ENCODE measurements at regions of chr6 and their contacts with region 1.

Region 1: DNA sequence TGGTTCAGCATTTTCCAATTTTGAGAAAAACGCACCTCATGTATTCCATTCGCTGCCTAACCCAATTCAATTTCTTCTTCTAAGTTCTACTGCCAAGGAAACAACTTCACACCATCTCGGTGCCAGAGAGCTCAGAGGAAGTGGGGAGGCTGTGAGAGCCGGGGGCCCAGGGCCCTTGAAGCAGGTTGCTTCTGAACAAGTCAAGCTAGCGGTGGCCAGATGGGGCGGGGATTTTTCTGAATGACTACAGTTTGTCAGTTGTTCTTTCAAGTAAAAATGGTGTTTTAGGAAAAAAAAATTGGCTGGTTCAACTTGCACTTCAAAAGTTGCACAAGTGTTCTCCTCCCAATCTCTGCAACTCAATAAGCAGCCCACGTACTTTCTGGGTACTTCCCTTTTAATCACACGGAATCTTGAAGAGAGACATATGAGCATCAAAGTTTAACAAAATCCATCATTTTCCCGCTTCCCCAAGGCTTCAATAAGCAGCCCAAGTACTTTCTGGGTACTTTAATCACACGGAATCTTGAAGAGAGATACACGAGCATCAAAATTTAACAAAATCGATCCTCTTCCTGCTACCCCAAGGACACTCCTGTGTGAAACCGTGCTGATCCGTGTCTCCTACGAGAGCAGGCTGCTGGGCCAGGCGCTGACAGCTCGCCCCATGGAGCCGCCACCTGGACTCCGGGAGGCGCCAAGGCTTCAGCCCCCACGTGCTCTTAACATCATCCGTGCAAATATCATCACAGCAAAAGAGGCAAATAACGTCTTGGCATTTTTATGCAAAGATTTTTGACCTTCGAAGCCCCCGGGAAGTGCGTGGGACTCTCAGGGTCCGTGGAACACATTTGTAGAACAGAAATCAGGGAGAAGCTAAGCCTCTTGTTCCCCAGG is 186.7 kb upstream of the PDE10A start:
- DNase-seq: peak in 2 of 4 donors; percentile 49 to 64
- ATAC-seq: peak; percentile 53
- H3K4me3 ChIP-seq: no peak overlapping the region
- H3K27ac ChIP-seq: no peak overlapping the region
- H3K4me1 ChIP-seq: peaks cover 3 to 10% of the 10 kb centered on the region in 2 donors
- H3K27me3 ChIP-seq: peaks cover 21 to 89% of the 10 kb centered on the region in 2 donors
- CTCF ChIP-seq: no peak

Region 2: GRCh38 chr6:165439928-165440554 is 409.7 kb before region 1 on chr6:
- intact Hi-C with region 1: loop called in 1 of 2 experiments (anchors 10 kb)
- DNase-seq: peak in 2 of 4 donors; percentile 38 to 61
- ATAC-seq: peak; percentile 75
- H3K4me3 ChIP-seq: no peak overlapping the region
- H3K27ac ChIP-seq: no peak overlapping the region
- H3K4me1 ChIP-seq: no peaks in the 10 kb centered on the region
- H3K27me3 ChIP-seq: no peaks in the 10 kb centered on the region
- CTCF ChIP-seq: peak; percentile 18 to 36

Region 3: GRCh38 chr6:165615636-165616035 is 234.1 kb before region 1 on chr6:
- intact Hi-C with region 1: no loop called
- DNase-seq: no peak
- ATAC-seq: no peak
- H3K4me3 ChIP-seq: no peak overlapping the region
- H3K27ac ChIP-seq: no peak overlapping the region
- H3K4me1 ChIP-seq: no peaks in the 10 kb centered on the region
- H3K27me3 ChIP-seq: no peaks in the 10 kb centered on the region
- CTCF ChIP-seq: no peak

Region 4: GRCh38 chr6:165732696-165733488 is 116.9 kb before region 1 on chr6:
- intact Hi-C with region 1: loop called in 1 of 2 experiments (anchors 10 kb)
- DNase-seq: no peak
- ATAC-seq: no peak
- H3K4me3 ChIP-seq: no peak overlapping the region
- H3K27ac ChIP-seq: no peak overlapping the region
- H3K4me1 ChIP-seq: no peaks in the 10 kb centered on the region
- H3K27me3 ChIP-seq: no peaks in the 10 kb centered on the region
- CTCF ChIP-seq: no peak

Region 5: DNA sequence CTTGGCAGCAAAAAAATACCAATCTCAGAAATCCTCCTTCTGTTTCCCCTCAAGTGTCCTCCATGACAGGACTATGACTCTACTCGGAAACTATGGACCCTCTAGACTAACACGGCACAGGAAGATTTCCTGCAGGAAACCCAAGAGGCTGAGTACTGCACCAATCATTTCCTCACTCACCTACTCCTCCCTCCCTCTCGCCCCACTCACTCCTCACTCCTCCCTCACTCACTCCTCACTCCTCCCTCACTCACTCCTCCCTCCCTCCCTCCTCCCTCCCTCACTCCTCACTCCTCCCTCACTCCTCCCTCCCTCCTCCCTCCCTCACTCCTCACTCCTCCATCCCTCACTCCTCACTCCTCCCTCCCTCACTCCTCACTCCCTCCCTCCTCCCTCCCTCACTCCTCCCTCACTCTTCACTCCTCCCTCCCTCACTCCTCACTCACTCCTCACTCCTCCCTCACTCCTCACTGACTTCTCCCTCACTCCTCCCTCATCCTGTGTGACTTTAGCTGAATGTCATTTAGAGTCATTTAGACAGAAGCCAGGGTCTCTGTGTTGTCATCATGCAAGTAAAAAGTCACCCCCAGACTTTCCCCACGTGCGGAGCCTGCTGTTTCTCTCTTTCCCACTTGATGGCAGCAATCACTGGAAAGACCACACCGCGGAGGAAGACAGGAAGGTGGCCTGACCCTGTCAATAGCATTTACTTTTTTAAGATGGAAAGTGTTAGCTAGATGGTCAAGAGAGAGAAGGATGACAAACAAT is 40.0 kb after region 1 on chr6:
- intact Hi-C with region 1: no loop called
- DNase-seq: peak in 1 of 4 donors; percentile 30
- ATAC-seq: peak; percentile 68
- H3K4me3 ChIP-seq: no peak overlapping the region
- H3K27ac ChIP-seq: no peak overlapping the region
- H3K4me1 ChIP-seq: no peaks in the 10 kb centered on the region
- H3K27me3 ChIP-seq: peaks cover 0 to 28% of the 10 kb centered on the region in 2 donors
- CTCF ChIP-seq: no peak